IMR-90 (cell line): ENCODE measurements at regions of chr12 and their contacts with region 1.

Region 1: DNA sequence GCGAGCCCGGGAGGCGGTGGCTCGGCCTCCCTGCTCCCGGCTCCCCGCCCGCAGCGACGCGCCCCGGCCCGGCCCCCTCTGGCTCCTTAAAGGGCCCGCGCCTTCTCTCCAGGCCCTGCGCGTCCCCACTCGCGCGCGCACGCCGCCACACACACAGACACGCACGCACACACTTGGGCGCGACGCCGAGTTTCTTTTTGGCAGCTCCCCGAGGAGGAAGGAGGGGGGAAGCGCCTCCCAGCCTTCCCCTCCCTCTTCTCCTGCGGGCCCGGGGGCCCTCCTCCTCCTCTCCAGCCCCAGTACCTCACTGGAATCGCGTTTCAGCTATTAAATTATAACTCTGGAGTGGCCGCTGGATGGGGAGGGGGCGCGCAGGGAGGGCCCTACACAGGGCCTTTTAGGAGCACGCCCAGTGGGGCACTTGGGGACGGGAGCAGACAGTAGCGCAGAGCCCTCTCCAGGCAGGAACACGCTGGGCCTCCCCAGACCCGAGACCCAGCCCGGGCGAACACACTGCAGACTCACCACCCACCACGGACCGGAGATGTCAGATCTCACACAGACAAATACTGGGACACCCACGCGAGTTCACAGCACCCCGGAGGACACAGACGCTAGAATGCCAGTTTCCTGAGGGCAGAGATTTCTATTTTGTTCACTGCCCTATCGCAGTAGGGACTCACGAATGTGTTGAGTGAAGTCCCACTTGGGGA is 405 bp upstream of the NCOR2 start:
- DNase-seq: peak; percentile 94
- ATAC-seq: peak; percentile 83
- H3K4me3 ChIP-seq: peak overlapping the region; percentile 0
- H3K27ac ChIP-seq: peak overlapping the region; percentile 89
- H3K4me1 ChIP-seq: peaks cover 23% of the 10 kb centered on the region
- H3K27me3 ChIP-seq: no peaks in the 10 kb centered on the region
- CTCF ChIP-seq: peak; percentile 22; the same call in 1 of the 2 replicates
- POLR2A ChIP-seq: no peak
- RAD21 ChIP-seq: peak; percentile 3; the same call in 1 of the 2 replicates

Region 2: GRCh38 chr12:124279846-124280360 is 287.9 kb before region 1 on chr12:
- CTCF ChIA-PET with region 1: no interaction called
- POLR2A ChIA-PET with region 1: no interaction called
- dilution Hi-C with region 1: no loop called
- in situ Hi-C with region 1: no loop called
- intact Hi-C with region 1: no loop called
- DNase-seq: no peak
- ATAC-seq: peak; percentile 21; the same call in 1 of the 2 replicates
- H3K4me3 ChIP-seq: no peak overlapping the region
- H3K27ac ChIP-seq: no peak overlapping the region
- H3K4me1 ChIP-seq: no peaks in the 10 kb centered on the region
- H3K27me3 ChIP-seq: peaks cover 71% of the 10 kb centered on the region
- CTCF ChIP-seq: no peak
- POLR2A ChIP-seq: no peak
- RAD21 ChIP-seq: no peak

Region 3: GRCh38 chr12:124388679-124389536 is 178.9 kb before region 1 on chr12:
- CTCF ChIA-PET with region 1: interaction called, 3 read pairs
- POLR2A ChIA-PET with region 1: no interaction called
- dilution Hi-C with region 1: no loop called
- in situ Hi-C with region 1: loop called (anchors 10 kb)
- intact Hi-C with region 1: loop called (anchors 5 kb)
- DNase-seq: peak; percentile 85
- ATAC-seq: peak; percentile 65
- H3K4me3 ChIP-seq: peak overlapping the region; percentile 97
- H3K27ac ChIP-seq: peak overlapping the region; percentile 98
- H3K4me1 ChIP-seq: peaks cover 62% of the 10 kb centered on the region
- H3K27me3 ChIP-seq: no peaks in the 10 kb centered on the region
- CTCF ChIP-seq: no peak
- POLR2A ChIP-seq: peak; percentile 94
- RAD21 ChIP-seq: peak; percentile 9; the same call in 1 of the 2 replicates

Region 4: DNA sequence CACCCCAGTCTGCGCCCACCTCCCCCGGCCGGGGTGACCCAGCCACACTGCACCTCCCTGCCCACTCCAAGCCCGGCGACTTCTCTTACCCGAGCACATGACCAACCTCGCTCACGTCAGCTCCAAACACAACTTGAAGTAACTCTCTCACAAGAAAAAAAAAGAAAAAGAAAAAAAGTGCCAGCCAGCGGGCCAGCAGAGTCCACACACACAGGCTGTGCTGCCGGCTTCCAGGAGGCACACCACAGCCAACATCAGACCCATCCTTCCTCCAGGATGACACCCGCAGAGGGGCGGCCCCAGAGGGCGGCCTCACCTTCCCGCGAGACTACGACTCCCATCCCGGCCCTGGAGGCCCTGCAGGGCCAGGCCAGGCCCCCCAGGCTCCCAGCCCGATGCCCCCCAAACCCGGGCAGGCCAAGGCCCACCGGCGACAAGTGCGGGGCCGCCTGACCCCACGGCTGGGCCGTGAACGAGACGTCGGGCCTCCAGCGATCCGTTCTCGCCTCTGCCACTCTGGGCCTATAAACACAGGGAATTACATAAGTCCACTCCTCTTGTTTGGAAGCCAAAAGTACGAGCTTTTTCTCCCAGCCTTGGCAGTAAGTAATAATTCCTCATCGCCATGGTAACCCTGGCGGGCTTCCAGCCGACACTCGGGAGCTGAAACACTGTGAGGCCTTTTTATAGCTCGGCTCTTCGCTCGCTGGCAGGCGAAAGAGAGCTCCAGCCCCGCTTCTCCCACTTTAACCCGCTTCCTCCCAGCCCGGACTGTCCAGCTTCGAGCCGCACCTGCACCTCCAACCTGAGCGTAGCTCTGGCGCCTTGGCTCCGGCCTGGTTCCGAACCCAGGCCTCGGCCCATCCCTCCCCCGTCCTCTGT is 49.5 kb before region 1 on chr12:
- CTCF ChIA-PET with region 1: no interaction called
- POLR2A ChIA-PET with region 1: no interaction called
- dilution Hi-C with region 1: no loop called
- in situ Hi-C with region 1: no loop called
- intact Hi-C with region 1: loop called (anchors 2 kb)
- DNase-seq: peak; percentile 99
- ATAC-seq: peak; percentile 78
- H3K4me3 ChIP-seq: peak overlapping the region; percentile 19
- H3K27ac ChIP-seq: peak overlapping the region; percentile 85
- H3K4me1 ChIP-seq: peaks cover 37% of the 10 kb centered on the region
- H3K27me3 ChIP-seq: no peaks in the 10 kb centered on the region
- CTCF ChIP-seq: no peak
- POLR2A ChIP-seq: no peak; the same call in 1 of the 2 replicates
- RAD21 ChIP-seq: peak; percentile 20; the same call in 1 of the 2 replicates

Region 5: GRCh38 chr12:124582108-124582424 is 14.2 kb after region 1 on chr12:
- CTCF ChIA-PET with region 1: no interaction called
- POLR2A ChIA-PET with region 1: no interaction called
- dilution Hi-C with region 1: no loop called
- in situ Hi-C with region 1: no loop called
- intact Hi-C with region 1: no loop called
- DNase-seq: no peak
- ATAC-seq: no peak
- H3K4me3 ChIP-seq: no peak overlapping the region
- H3K27ac ChIP-seq: no peak overlapping the region
- H3K4me1 ChIP-seq: no peaks in the 10 kb centered on the region
- H3K27me3 ChIP-seq: peaks cover 2% of the 10 kb centered on the region; the same call in 1 of the 2 replicates
- CTCF ChIP-seq: no peak
- POLR2A ChIP-seq: no peak
- RAD21 ChIP-seq: no peak

Region 6: GRCh38 chr12:124680863-124681778 is 113.3 kb after region 1 on chr12:
- CTCF ChIA-PET with region 1: no interaction called
- POLR2A ChIA-PET with region 1: no interaction called
- dilution Hi-C with region 1: no loop called
- in situ Hi-C with region 1: no loop called
- intact Hi-C with region 1: loop called (anchors 1 kb)
- DNase-seq: peak; percentile 95
- ATAC-seq: peak; percentile 76
- H3K4me3 ChIP-seq: no peak overlapping the region
- H3K27ac ChIP-seq: peak overlapping the region; percentile 74
- H3K4me1 ChIP-seq: peaks cover 38% of the 10 kb centered on the region
- H3K27me3 ChIP-seq: no peaks in the 10 kb centered on the region
- CTCF ChIP-seq: peak; percentile 51; the same call in 1 of the 2 replicates
- POLR2A ChIP-seq: no peak
- RAD21 ChIP-seq: peak; percentile 53

Region 7: GRCh38 chr12:124745891-124746570 is 178.2 kb after region 1 on chr12:
- CTCF ChIA-PET with region 1: no interaction called
- POLR2A ChIA-PET with region 1: no interaction called
- dilution Hi-C with region 1: no loop called
- in situ Hi-C with region 1: no loop called
- intact Hi-C with region 1: loop called (anchors 5 kb)
- DNase-seq: peak; percentile 81
- ATAC-seq: peak; percentile 94
- H3K4me3 ChIP-seq: no peak overlapping the region
- H3K27ac ChIP-seq: peak overlapping the region; percentile 79
- H3K4me1 ChIP-seq: peaks cover 19% of the 10 kb centered on the region
- H3K27me3 ChIP-seq: no peaks in the 10 kb centered on the region
- CTCF ChIP-seq: no peak
- POLR2A ChIP-seq: no peak
- RAD21 ChIP-seq: no peak

Region 8: GRCh38 chr12:125149160-125150108 is 581.6 kb after region 1 on chr12:
- CTCF ChIA-PET with region 1: no interaction called
- POLR2A ChIA-PET with region 1: no interaction called
- dilution Hi-C with region 1: no loop called
- in situ Hi-C with region 1: no loop called
- intact Hi-C with region 1: no loop called
- DNase-seq: no peak
- ATAC-seq: no peak
- H3K4me3 ChIP-seq: no peak overlapping the region
- H3K27ac ChIP-seq: no peak overlapping the region
- H3K4me1 ChIP-seq: no peaks in the 10 kb centered on the region
- H3K27me3 ChIP-seq: peaks cover 2% of the 10 kb centered on the region; the same call in 1 of the 2 replicates
- CTCF ChIP-seq: no peak
- POLR2A ChIP-seq: no peak
- RAD21 ChIP-seq: no peak